GM12878 (cell line): ENCODE measurements at regions of chrX and their contacts with region 1.

Region 1: DNA sequence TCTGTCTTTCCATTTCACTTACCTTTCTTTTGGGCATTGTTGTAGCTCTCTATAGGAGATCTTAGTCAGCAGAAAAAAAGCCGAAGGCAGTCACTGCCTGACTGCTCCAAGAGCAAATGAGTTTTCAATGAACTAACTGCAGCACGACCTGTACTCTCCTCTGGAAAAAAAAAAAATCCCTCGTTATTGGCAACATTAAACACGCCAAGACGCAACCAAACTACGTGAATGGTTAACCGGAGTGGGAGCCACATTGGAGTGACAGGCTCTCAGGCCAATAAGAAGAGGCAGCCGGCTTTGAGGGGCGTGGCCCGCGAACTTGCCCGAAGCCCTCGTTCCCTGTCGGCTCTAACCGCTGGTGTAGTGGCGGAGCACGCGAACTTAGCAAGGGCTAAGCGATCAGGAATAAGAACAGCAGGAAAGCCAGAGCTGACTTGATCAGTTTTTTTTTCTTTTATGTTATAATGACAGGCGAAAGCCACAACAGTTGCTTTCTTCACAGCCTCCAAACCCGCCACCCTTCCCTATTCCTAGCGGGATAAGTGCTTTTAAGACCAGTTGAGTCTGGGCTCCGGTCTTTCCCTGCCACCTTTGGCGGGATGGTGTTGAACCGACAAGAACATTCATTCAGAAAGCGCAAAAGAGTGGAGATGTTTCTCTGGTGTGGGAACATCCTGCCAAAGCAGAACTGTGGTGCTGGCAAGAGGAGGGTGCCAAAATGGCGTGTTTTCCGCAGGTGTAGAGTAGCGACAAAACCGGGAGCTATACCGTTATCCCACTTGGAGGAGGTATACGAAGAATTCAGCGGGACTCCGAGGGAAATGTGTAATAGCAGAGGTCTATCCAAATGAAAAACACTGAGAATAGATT is 80.0 kb downstream of the HMGN5 start:
- DNase-seq: peak; percentile 76
- ATAC-seq: peak; percentile 96
- H3K4me3 ChIP-seq: peak overlapping the region; percentile 69
- H3K27ac ChIP-seq: peak overlapping the region; percentile 38
- H3K4me1 ChIP-seq: no peaks in the 10 kb centered on the region
- H3K27me3 ChIP-seq: no peaks in the 10 kb centered on the region
- CTCF ChIP-seq: no peak
- EP300 ChIP-seq: no peak
- POLR2A ChIP-seq: no peak
- RAD21 ChIP-seq: no peak

Region 2: DNA sequence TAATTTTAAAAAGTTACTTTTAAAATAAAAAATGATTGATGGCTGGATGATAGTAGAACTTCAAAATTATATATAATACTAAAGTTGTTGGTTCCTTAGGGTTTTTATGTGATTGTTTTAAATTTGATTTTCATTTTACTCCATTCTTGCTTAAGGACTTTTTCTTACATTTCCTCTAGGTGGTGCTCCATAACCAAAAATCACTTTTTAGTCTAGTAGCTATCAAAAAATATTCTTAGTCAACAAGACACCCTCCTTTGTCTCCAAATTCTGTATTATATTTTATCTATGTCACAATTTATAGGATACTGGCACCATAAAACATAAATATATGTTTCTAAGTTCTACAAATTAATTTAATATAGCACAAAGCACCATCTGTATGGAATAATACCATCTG is 244.9 kb before region 1 on chrX:
- CTCF ChIA-PET with region 1: interaction called, 7 read pairs
- POLR2A ChIA-PET with region 1: no interaction called
- RAD21 ChIA-PET with region 1: interaction called, 4 read pairs
- SMC1A ChIA-PET with region 1: interaction called, 10 read pairs
- in situ Hi-C with region 1: no loop called
- intact Hi-C with region 1: loop called (anchors 2 kb)
- DNase-seq: peak; percentile 1
- ATAC-seq: 0 out of 3 replicates have a peak, but pooled peaks have one; percentile 37
- H3K4me3 ChIP-seq: no peak overlapping the region
- H3K27ac ChIP-seq: no peak overlapping the region
- H3K4me1 ChIP-seq: no peaks in the 10 kb centered on the region
- H3K27me3 ChIP-seq: no peaks in the 10 kb centered on the region
- CTCF ChIP-seq: peak; percentile 30 to 49 (median 36); a peak in 4 of 6 replicates
- EP300 ChIP-seq: no peak
- POLR2A ChIP-seq: no peak
- RAD21 ChIP-seq: peak; percentile 65

Region 3: GRCh38 chrX:81201671-81202455 is 80.1 kb after region 1 on chrX and contains the starts of genes HMGN5 and SH3BGRL:
- CTCF ChIA-PET with region 1: interaction called, 13 read pairs
- POLR2A ChIA-PET with region 1: interaction called, 6 read pairs
- RAD21 ChIA-PET with region 1: interaction called, 8 read pairs
- SMC1A ChIA-PET with region 1: interaction called, 4 read pairs
- in situ Hi-C with region 1: no loop called
- intact Hi-C with region 1: loop called (anchors 2 kb)
- DNase-seq: peak; percentile 57
- ATAC-seq: peak; percentile 95
- H3K4me3 ChIP-seq: peak within 1 kb of the TSS; percentile 63
- H3K27ac ChIP-seq: peak within 1 kb of the TSS; percentile 91
- H3K4me1 ChIP-seq: no peaks in the 10 kb centered on the region
- H3K27me3 ChIP-seq: no peaks in the 10 kb centered on the region
- CTCF ChIP-seq: no peak
- EP300 ChIP-seq: no peak
- POLR2A ChIP-seq: peak; percentile 75
- RAD21 ChIP-seq: no peak
- polyA plus RNA-seq, gene HMGN5: 43.0 to 50.8 TPM
- polyA plus RNA-seq, gene SH3BGRL: 127 to 145 TPM

Region 4: GRCh38 chrX:81241753-81242152 is 120.0 kb after region 1 on chrX:
- CTCF ChIA-PET with region 1: no interaction called
- POLR2A ChIA-PET with region 1: no interaction called
- RAD21 ChIA-PET with region 1: no interaction called
- SMC1A ChIA-PET with region 1: no interaction called
- in situ Hi-C with region 1: no loop called
- intact Hi-C with region 1: no loop called
- DNase-seq: no peak
- ATAC-seq: no peak
- H3K4me3 ChIP-seq: no peak overlapping the region
- H3K27ac ChIP-seq: no peak overlapping the region
- H3K4me1 ChIP-seq: no peaks in the 10 kb centered on the region
- H3K27me3 ChIP-seq: no peaks in the 10 kb centered on the region
- CTCF ChIP-seq: no peak
- EP300 ChIP-seq: no peak
- POLR2A ChIP-seq: no peak
- RAD21 ChIP-seq: no peak

Region 5: GRCh38 chrX:81280148-81280547 is 158.4 kb after region 1 on chrX:
- CTCF ChIA-PET with region 1: no interaction called
- POLR2A ChIA-PET with region 1: no interaction called
- RAD21 ChIA-PET with region 1: no interaction called
- SMC1A ChIA-PET with region 1: no interaction called
- in situ Hi-C with region 1: no loop called
- intact Hi-C with region 1: no loop called
- DNase-seq: no peak
- ATAC-seq: no peak
- H3K4me3 ChIP-seq: no peak overlapping the region
- H3K27ac ChIP-seq: no peak overlapping the region
- H3K4me1 ChIP-seq: no peaks in the 10 kb centered on the region
- H3K27me3 ChIP-seq: no peaks in the 10 kb centered on the region
- CTCF ChIP-seq: no peak
- EP300 ChIP-seq: no peak
- POLR2A ChIP-seq: no peak
- RAD21 ChIP-seq: no peak

Region 6: GRCh38 chrX:81308086-81308829 is 186.5 kb after region 1 on chrX:
- CTCF ChIA-PET with region 1: no interaction called
- POLR2A ChIA-PET with region 1: no interaction called
- RAD21 ChIA-PET with region 1: no interaction called
- SMC1A ChIA-PET with region 1: no interaction called
- in situ Hi-C with region 1: no loop called
- intact Hi-C with region 1: no loop called
- DNase-seq: no peak
- ATAC-seq: no peak
- H3K4me3 ChIP-seq: no peak overlapping the region
- H3K27ac ChIP-seq: no peak overlapping the region
- H3K4me1 ChIP-seq: no peaks in the 10 kb centered on the region
- H3K27me3 ChIP-seq: no peaks in the 10 kb centered on the region
- CTCF ChIP-seq: no peak
- EP300 ChIP-seq: no peak
- POLR2A ChIP-seq: no peak
- RAD21 ChIP-seq: no peak

Region 7: GRCh38 chrX:81662381-81662780 is 540.6 kb after region 1 on chrX:
- CTCF ChIA-PET with region 1: no interaction called
- POLR2A ChIA-PET with region 1: no interaction called
- RAD21 ChIA-PET with region 1: no interaction called
- SMC1A ChIA-PET with region 1: no interaction called
- in situ Hi-C with region 1: no loop called
- intact Hi-C with region 1: no loop called
- DNase-seq: no peak
- ATAC-seq: no peak
- H3K4me3 ChIP-seq: no peak overlapping the region
- H3K27ac ChIP-seq: no peak overlapping the region
- H3K4me1 ChIP-seq: no peaks in the 10 kb centered on the region
- H3K27me3 ChIP-seq: no peaks in the 10 kb centered on the region
- CTCF ChIP-seq: no peak
- EP300 ChIP-seq: no peak
- POLR2A ChIP-seq: no peak
- RAD21 ChIP-seq: no peak